Heart right ventricle (tissue), 16 donors: ENCODE measurements at regions of chr9 and their contacts with region 1.

Region 1: DNA sequence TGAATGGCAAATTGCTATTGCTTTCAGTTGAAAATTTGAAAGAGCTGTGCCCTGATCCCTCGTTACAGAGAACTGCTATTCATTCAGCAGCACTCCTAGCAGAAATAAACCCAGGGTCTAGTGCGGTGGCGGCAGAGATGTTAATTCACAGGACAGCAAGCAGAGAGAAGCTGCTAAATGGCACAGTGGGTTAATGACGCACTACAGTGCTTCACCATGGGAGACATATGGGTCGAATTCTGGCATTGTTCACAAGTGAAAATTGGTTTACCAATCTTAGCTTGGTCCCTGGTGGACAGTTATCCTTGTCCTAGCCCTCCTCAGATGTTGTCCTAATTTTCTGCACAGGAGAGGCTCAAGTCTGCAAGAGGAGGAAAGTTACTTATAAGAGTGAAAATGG is 807.4 kb downstream of the TLE1 start:
- DNase-seq: no peak
- ATAC-seq: no peak
- H3K4me3 ChIP-seq: no peak overlapping the region
- H3K27ac ChIP-seq: no peak overlapping the region
- H3K4me1 ChIP-seq: no peaks in the 10 kb centered on the region
- H3K27me3 ChIP-seq: no peaks in the 10 kb centered on the region
- CTCF ChIP-seq: no peak

Region 2: GRCh38 chr9:80605129-80605528 is 276.8 kb before region 1 on chr9:
- intact Hi-C with region 1: loop called in 1 of 10 experiments (anchors 5 kb)
- DNase-seq: no peak
- ATAC-seq: no peak
- H3K4me3 ChIP-seq: no peak overlapping the region
- H3K27ac ChIP-seq: no peak overlapping the region
- H3K4me1 ChIP-seq: no peaks in the 10 kb centered on the region
- H3K27me3 ChIP-seq: no peaks in the 10 kb centered on the region
- CTCF ChIP-seq: peak in 7 of 9 donors; percentile 24 to 52 (median 37)

Region 3: DNA sequence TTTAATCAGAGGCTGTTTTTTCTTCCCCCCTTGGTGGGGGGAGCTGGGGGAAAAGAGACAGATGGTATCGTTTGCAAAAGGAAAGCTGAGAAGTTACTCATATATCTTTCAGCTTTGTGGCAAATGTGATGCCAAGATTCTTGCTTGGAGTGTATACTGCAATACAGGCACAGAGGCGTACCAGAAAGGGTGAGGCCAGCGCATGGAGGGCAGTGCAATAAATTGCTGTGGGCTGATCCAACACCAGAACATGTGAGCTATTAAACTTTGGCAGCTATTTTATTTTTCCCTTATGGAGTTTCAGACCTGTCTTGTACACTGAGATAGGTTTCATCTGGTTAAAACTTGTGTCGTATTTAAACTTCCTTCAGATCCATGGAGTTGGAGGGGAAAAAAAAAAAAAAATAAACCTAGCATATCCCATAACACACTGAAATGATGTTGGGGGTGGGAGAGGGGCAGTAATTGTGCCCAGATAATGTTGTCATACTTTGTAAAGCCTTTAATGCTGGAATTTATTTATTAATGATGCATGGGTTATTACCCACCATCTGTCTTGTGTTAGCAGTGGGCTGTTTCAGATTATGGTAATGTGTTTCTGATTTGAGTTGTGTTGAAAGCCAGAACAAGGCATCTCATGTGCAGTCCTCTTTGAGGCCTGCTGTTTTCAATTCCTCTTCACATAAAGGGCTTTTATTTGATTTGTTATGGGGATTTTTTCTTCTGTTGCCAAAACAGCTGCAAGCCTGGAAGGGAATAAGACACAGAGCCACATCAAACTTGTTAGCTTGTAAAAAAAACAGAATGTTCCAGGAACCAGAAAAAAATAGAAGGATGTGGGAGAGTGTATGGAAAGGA is 83.9 kb before region 1 on chr9:
- intact Hi-C with region 1: no loop called
- DNase-seq: peak; percentile 11 to 14
- ATAC-seq: peak; percentile 50 to 89 (median 78)
- H3K4me3 ChIP-seq: no peak overlapping the region
- H3K27ac ChIP-seq: peak overlapping the region in 5 of 10 donors; percentile 10 to 38 (median 19)
- H3K4me1 ChIP-seq: peaks cover 0 to 18% (median 0%) of the 10 kb centered on the region in 9 donors
- H3K27me3 ChIP-seq: no peaks in the 10 kb centered on the region
- CTCF ChIP-seq: no peak

Region 4: GRCh38 chr9:80946496-80947170 is 64.7 kb after region 1 on chr9:
- intact Hi-C with region 1: no loop called
- DNase-seq: no peak
- ATAC-seq: no peak
- H3K4me3 ChIP-seq: no peak overlapping the region
- H3K27ac ChIP-seq: no peak overlapping the region
- H3K4me1 ChIP-seq: no peaks in the 10 kb centered on the region
- H3K27me3 ChIP-seq: no peaks in the 10 kb centered on the region
- CTCF ChIP-seq: no peak